Posterior vena cava (tissue), 2 donors: ENCODE measurements at regions of chr10 and their contacts with region 1.

Region 1: GRCh38 chr10:101141616-101142532 is 10.8 kb downstream of the TLX1 start:
- DNase-seq: peak; percentile 95

Region 2: DNA sequence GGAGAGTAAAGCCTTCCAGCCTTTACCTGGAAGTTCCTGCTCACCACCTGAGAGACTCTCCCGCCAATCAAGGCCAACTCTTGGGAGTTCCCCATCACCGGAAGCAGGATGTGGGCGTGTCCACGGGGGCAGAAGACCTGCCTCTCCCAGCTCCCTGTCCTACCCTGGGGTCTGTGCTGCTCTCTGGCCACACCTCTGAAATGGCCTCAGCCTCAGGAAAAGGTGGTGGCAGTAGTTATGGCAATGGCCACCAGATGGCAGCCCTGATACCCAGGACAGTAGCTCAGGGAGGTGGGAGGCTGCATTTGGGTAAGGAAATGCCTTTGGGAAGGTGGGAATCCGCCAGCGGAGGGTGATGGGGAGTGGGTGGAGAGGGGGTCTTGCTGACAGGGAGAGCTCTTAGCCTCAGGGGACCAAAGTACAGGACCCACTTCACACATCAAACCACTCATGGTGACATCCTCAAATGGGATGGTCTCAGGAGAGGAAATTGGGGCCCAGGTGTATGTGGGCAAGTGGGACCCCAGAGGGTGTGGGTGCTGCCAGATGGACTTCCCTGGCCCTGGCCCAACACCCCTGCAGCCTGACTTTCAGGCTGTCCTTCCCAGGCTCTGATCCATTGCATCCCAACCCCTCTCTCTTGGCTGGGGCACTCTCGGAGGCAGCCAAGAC is 46.2 kb before region 1 on chr10:
- intact Hi-C with region 1: loop called in 1 of 2 experiments (anchors 5 kb)
- DNase-seq: no peak

Region 3: GRCh38 chr10:101110856-101111546 is 30.9 kb before region 1 on chr10:
- intact Hi-C with region 1: loop called in 1 of 2 experiments (anchors 1 kb)
- DNase-seq: peak; percentile 61

Region 4: GRCh38 chr10:101161494-101162299 is 19.8 kb after region 1 on chr10:
- intact Hi-C with region 1: no loop called
- DNase-seq: peak; percentile 89